HepG2 (cell line): ENCODE measurements at regions of chr13 and their contacts with region 1.

Region 1: GRCh38 chr13:110108347-110109174 is 198.4 kb downstream of the COL4A1 start:
- DNase-seq: peak; percentile 51
- ATAC-seq: peak; percentile 98
- H3K4me3 ChIP-seq: no peak overlapping the region
- H3K27ac ChIP-seq: no peak overlapping the region
- H3K4me1 ChIP-seq: no peaks in the 10 kb centered on the region
- H3K27me3 ChIP-seq: no peaks in the 10 kb centered on the region
- CTCF ChIP-seq: peak; percentile 91
- EP300 ChIP-seq: no peak
- POLR2A ChIP-seq: no peak
- RAD21 ChIP-seq: peak; percentile 80

Region 2: GRCh38 chr13:108961542-108962125 is 1146.9 kb before region 1 on chr13:
- CTCF ChIA-PET with region 1: interaction called, 6 read pairs
- POLR2A ChIA-PET with region 1: no interaction called
- in situ Hi-C with region 1: loop called (anchors 5 kb)
- intact Hi-C with region 1: loop called (anchors 1 kb)
- DNase-seq: peak; percentile 43
- ATAC-seq: peak; percentile 86
- H3K4me3 ChIP-seq: no peak overlapping the region
- H3K27ac ChIP-seq: no peak overlapping the region
- H3K4me1 ChIP-seq: no peaks in the 10 kb centered on the region
- H3K27me3 ChIP-seq: no peaks in the 10 kb centered on the region; a peak in 1 of 5 replicates
- CTCF ChIP-seq: peak; percentile 84
- EP300 ChIP-seq: no peak
- POLR2A ChIP-seq: no peak
- RAD21 ChIP-seq: peak; percentile 55; the same call in 1 of the 2 replicates

Region 3: GRCh38 chr13:109145631-109146030 is 962.9 kb before region 1 on chr13:
- CTCF ChIA-PET with region 1: no interaction called
- POLR2A ChIA-PET with region 1: no interaction called
- in situ Hi-C with region 1: loop called (anchors 10 kb)
- intact Hi-C with region 1: no loop called
- DNase-seq: peak; percentile 13
- ATAC-seq: peak; percentile 80
- H3K4me3 ChIP-seq: no peak overlapping the region
- H3K27ac ChIP-seq: no peak overlapping the region
- H3K4me1 ChIP-seq: no peaks in the 10 kb centered on the region
- H3K27me3 ChIP-seq: no peaks in the 10 kb centered on the region
- CTCF ChIP-seq: peak; percentile 65
- EP300 ChIP-seq: no peak
- POLR2A ChIP-seq: no peak
- RAD21 ChIP-seq: peak; percentile 42; the same call in 1 of the 2 replicates

Region 4: GRCh38 chr13:109610517-109610916 is 498.0 kb before region 1 on chr13:
- CTCF ChIA-PET with region 1: no interaction called
- POLR2A ChIA-PET with region 1: no interaction called
- in situ Hi-C with region 1: no loop called
- intact Hi-C with region 1: loop called (anchors 2 kb)
- DNase-seq: no peak
- ATAC-seq: peak; percentile 86
- H3K4me3 ChIP-seq: no peak overlapping the region
- H3K27ac ChIP-seq: no peak overlapping the region
- H3K4me1 ChIP-seq: no peaks in the 10 kb centered on the region
- H3K27me3 ChIP-seq: no peaks in the 10 kb centered on the region
- CTCF ChIP-seq: peak; percentile 48
- EP300 ChIP-seq: no peak
- POLR2A ChIP-seq: no peak
- RAD21 ChIP-seq: no peak

Region 5: DNA sequence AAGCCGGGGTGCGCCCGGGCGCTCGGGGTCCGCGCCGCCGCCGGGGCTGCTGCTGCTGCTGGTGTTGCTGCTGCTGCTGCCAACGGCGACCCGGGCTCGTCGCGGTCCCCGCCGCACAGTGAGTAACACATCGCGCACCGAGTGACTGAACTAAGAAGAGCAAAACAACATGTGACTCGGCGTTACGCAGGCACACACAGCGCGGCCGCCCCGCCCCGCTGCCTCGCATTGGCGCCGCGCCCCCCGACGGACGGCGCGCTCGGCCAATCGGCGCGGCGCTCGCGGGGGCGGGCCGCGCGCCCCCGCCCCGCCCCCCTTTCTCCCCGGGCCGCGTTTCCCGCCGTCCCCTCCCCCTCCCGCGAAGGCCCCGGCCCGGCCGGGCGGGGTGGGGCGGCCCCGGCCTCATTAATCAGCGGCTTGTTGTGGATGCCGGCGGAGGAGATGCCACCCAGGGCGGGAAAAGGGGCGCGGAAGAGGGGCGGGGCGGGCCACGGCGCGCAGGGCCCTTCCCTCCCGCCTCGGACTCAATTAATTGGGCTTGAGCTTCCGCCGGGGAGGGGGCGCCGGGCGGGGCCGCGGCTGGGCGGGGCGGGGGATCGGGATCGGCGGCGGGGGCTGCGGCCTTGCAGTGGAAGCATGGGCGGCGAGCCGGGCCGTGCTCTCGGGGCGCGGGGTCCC is 322.0 kb before region 1 on chr13 and contains the start of gene IRS2:
- CTCF ChIA-PET with region 1: no interaction called
- POLR2A ChIA-PET with region 1: no interaction called
- in situ Hi-C with region 1: no loop called
- intact Hi-C with region 1: loop called (anchors 5 kb)
- DNase-seq: no peak
- ATAC-seq: peak; percentile 46; the same call in 2 of the 3 replicates
- H3K4me3 ChIP-seq: peak within 1 kb of the TSS in 1 of 3 experiments; percentile 10; a peak in 1 of 6 replicates
- H3K27ac ChIP-seq: no peak within 1 kb of the TSS
- H3K4me1 ChIP-seq: no peaks in the 10 kb centered on the region
- H3K27me3 ChIP-seq: peaks cover 0 to 8% of the 10 kb centered on the region in 2 experiments; a peak in 2 of 5 replicates
- CTCF ChIP-seq: no peak
- EP300 ChIP-seq: no peak
- POLR2A ChIP-seq: no peak
- RAD21 ChIP-seq: no peak
- total RNA-seq, gene IRS2: 0.02 TPM in 1 of 2 replicates, not detected in the other

Region 6: GRCh38 chr13:110126391-110126961 is 17.9 kb after region 1 on chr13:
- CTCF ChIA-PET with region 1: no interaction called
- POLR2A ChIA-PET with region 1: no interaction called
- in situ Hi-C with region 1: no loop called
- intact Hi-C with region 1: no loop called
- DNase-seq: no peak
- ATAC-seq: no peak
- H3K4me3 ChIP-seq: no peak overlapping the region
- H3K27ac ChIP-seq: no peak overlapping the region
- H3K4me1 ChIP-seq: no peaks in the 10 kb centered on the region
- H3K27me3 ChIP-seq: peaks cover 2 to 37% of the 10 kb centered on the region in 2 experiments; a peak in 2 of 5 replicates
- CTCF ChIP-seq: no peak
- EP300 ChIP-seq: no peak
- POLR2A ChIP-seq: no peak
- RAD21 ChIP-seq: no peak